ENCODE measurements at regions of chr5 and their contacts with region 1.

Region 1: GRCh38 chr5:43313035-43313853 is at the start of gene HMGCS1:
- DNase-seq: peak; percentile 98
- ATAC-seq: peak; percentile 98 to 99
- total RNA-seq, gene HMGCS1: 29.5 to 43.8 TPM

Region 2: DNA sequence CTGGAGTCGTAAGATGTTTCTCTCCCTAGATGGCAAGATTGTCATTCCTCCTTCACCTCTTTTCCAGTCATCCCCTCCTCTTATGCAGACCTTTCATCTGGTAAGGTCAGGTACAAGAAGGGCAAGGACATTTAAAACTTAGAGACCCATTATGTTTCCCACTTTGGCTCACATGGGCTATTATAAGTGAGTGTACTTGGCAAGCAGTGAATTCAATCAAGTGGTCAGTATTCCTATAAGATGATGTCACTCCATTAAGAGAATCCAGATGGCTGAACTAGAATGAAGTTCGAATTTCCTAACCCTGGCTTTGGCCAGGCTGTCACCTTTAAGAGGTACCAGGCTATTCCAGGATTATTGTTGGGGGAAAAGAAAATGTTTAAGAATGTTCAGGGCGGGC is 160.3 kb before region 1 on chr5:
- intact Hi-C with region 1: no loop called
- DNase-seq: no peak
- ATAC-seq: no peak

Region 3: DNA sequence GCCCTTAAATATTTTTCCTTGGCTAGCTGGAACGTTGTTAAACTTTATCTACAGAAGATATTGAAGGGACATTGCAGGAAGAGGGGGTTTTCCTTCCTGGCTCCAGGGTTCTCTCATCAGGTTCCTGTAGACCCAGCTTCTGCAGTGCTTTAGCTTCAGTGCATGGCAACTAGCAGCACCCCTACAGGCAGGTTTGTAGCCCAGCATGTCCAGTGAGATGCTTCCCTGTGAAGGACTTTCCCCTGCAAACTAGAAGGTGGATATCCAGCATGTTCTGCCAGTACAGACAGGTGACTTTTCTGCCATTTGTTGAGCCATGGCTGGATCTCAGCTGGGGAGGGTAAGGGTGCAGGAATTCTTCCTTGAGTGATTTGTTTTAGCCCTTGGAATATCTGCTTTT is 88.6 kb after region 1 on chr5:
- intact Hi-C with region 1: no loop called
- DNase-seq: no peak
- ATAC-seq: no peak

Region 4: DNA sequence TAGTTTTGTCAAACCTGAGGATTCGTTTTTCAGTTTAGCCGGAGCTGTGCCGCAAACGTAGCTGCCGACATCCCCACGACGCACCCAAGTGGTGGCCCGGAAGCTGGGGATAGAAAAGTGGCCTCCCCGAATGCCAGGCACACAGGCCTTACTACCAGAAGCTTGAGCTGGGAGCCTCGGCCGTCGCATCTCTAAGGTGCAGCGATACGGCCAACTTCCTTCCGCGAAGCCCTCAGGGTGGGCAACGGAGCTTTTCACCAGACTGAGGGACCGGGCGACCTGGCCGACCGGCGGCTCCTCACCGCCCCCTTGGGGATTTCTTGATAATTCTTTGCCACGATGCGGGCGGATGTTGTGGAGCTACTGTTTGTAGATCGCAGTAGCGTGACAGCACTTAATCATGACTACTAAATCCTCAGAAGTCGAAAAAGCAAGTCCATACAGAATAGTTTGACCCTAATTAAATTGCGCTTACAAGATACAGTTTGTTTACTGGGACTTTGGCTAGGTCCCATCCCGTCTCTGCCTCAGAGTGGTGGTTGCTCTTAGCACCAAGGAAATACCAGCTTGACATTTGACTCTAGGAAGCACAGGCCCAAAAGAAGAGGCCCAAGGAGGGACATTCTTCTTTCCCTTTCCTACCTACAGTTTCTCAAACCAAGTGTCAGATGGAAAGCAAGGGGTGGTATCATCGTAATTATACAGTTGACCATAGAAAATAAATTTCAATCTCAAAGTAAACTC is 171.0 kb after region 1 on chr5:
- intact Hi-C with region 1: loop called in 1 of 2 experiments (anchors 10 kb)
- DNase-seq: peak; percentile 84
- ATAC-seq: peak; percentile 75 to 87